Activated CD4-positive, alpha-beta memory T cell treated with anti-CD3 and anti-CD28 coated beads for 36 hours (primary cell): ENCODE measurements at regions of chr3 and their contacts with region 1.

Region 1: GRCh38 chr3:169149349-169149890 is 514.1 kb downstream of the MECOM start:
- DNase-seq: peak; percentile 84
- H3K4me3 Mint-ChIP-seq: peak overlapping the region; percentile 36
- H3K27ac Mint-ChIP-seq: no peak overlapping the region
- H3K4me1 Mint-ChIP-seq: peaks cover 21% of the 10 kb centered on the region
- H3K27me3 Mint-ChIP-seq: peaks cover 57% of the 10 kb centered on the region

Region 2: DNA sequence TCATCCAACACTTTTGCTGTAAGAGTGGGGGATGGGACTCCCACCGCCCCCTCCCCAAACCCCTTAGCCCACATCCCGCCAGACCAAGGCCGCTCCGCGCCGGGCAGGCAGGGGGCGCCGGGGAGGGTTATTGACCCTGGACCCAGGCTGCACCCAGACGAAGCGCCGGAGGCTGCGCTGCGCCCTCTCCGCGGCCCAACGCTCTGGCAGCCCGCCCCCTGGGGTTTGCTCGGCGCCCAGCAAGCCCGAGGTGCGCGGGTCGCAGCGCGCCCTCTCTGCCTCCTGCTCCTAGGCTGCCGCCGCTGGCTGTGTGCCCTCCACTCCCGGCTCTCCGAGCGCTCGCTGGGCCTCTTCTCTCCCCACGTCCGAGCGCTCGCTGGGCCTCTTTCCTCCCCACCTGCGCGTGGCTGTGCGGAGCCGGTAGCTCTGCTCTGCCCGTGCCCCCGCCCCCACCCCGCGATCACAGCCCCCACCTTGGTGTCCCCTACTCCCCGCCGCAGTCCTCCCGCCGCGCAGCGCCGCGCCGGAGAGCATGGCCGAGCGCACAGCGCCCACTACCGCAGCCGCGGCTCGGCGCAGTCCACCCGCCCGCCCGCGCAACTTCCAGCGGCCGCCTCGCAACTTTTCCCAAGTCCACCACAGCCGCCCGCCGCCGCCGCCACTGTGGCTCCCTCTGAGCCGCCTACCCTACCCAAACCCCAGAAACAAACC is 512.9 kb after region 1 on chr3:
- CTCF ChIA-PET with region 1: interaction called, 38 read pairs
- POLR2A ChIA-PET with region 1: no interaction called
- intact Hi-C with region 1: loop called (anchors 1 kb)
- DNase-seq: peak; percentile 57
- H3K4me3 Mint-ChIP-seq: peak overlapping the region; percentile 71
- H3K27ac Mint-ChIP-seq: no peak overlapping the region
- H3K4me1 Mint-ChIP-seq: peaks cover 39% of the 10 kb centered on the region
- H3K27me3 Mint-ChIP-seq: peaks cover 83% of the 10 kb centered on the region

Region 3: GRCh38 chr3:169846458-169847193 is 697.2 kb after region 1 on chr3:
- CTCF ChIA-PET with region 1: no interaction called
- POLR2A ChIA-PET with region 1: no interaction called
- intact Hi-C with region 1: loop called (anchors 5 kb)
- DNase-seq: no peak
- H3K4me3 Mint-ChIP-seq: no peak overlapping the region
- H3K27ac Mint-ChIP-seq: no peak overlapping the region
- H3K4me1 Mint-ChIP-seq: no peaks in the 10 kb centered on the region
- H3K27me3 Mint-ChIP-seq: peaks cover 8% of the 10 kb centered on the region